ENCODE measurements at regions of chr14 and their contacts with region 1.

Region 1: DNA sequence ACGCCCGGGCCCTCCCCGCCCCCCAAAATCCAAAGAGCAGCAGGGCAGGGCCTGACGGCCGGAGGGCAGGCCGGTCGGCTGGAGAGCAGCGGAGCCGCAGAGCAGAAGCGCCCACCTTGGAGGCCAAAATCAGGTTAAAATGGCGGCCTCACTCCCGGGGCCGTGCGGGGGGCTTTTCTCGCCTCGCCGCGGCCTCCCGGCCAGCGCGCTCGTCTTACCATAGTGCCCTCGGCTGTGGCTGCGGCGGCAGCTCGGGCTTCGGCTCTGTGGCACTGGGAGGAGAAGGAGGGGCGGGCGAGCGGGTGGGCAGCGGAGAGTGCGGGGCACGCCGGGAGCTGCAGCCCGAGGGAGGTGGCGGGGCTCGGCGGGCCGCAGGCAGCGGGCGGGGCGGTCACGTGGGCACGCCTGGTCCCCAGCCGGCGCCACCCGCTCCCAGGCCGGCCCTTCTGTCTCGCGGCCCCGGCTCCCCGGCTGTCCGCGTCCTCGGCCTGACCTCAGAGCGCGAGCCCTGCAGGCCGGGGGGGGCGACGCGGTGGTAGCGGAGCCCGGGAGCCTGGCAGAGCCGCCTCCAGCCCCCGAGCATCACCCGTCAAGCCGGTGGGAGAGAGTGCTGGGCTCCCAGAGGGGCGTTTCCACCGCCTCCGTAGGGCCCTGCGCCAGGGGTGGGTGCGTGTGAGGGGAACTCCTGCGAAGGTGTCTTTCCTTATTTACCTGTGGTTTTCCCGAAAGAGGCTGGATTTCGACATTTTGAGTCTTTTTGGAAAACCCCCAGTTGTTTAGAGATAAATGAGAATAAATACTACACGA is at the start of gene CFL2:
- DNase-seq: peak; percentile 81 to 94
- H3K4me3 ChIP-seq: peak within 1 kb of the TSS; percentile 69 to 71
- H3K27ac ChIP-seq: peak within 1 kb of the TSS; percentile 95
- H3K4me1 ChIP-seq: peaks cover 0 to 45% (median 18%) of the 10 kb centered on the region in 4 donors
- H3K27me3 ChIP-seq: no peaks in the 10 kb centered on the region
- CTCF ChIP-seq: peak in 1 of 2 experiments; percentile 17

Region 2: GRCh38 chr14:34619471-34619870 is 95.1 kb before region 1 on chr14:
- intact Hi-C with region 1: no loop called
- DNase-seq: no peak
- H3K4me3 ChIP-seq: no peak overlapping the region
- H3K27ac ChIP-seq: no peak overlapping the region
- H3K4me1 ChIP-seq: peaks cover 0 to 14% (median 4%) of the 10 kb centered on the region in 4 donors
- H3K27me3 ChIP-seq: no peaks in the 10 kb centered on the region
- CTCF ChIP-seq: no peak

Region 3: GRCh38 chr14:34875031-34875922 is 160.8 kb after region 1 on chr14 and contains the start of gene BAZ1A:
- intact Hi-C with region 1: loop called (anchors 10 kb)
- DNase-seq: peak; percentile 57 to 82
- H3K4me3 ChIP-seq: peak within 1 kb of the TSS; percentile 72 to 92
- H3K27ac ChIP-seq: peak within 1 kb of the TSS; percentile 98 to 99
- H3K4me1 ChIP-seq: peaks cover 0 to 8% (median 3%) of the 10 kb centered on the region in 4 donors
- H3K27me3 ChIP-seq: no peaks in the 10 kb centered on the region
- CTCF ChIP-seq: peak; percentile 21 to 28

Measured in tibial artery (tissue), 4 donors.